Activated T-helper 2 cell treated with anti-CD3 and anti-CD28 coated beads, Interferon-gamma antibody, Interleukin-2, Interleukin-4, amounts not matched to agents 10 μg/mL and 5 μg/mL and 100 μg/mL, durations not matched to agents 14 hours and 24 hours and 36 hours (primary cell): ENCODE measurements at regions of chr1 and their contacts with region 1.

Region 1: DNA sequence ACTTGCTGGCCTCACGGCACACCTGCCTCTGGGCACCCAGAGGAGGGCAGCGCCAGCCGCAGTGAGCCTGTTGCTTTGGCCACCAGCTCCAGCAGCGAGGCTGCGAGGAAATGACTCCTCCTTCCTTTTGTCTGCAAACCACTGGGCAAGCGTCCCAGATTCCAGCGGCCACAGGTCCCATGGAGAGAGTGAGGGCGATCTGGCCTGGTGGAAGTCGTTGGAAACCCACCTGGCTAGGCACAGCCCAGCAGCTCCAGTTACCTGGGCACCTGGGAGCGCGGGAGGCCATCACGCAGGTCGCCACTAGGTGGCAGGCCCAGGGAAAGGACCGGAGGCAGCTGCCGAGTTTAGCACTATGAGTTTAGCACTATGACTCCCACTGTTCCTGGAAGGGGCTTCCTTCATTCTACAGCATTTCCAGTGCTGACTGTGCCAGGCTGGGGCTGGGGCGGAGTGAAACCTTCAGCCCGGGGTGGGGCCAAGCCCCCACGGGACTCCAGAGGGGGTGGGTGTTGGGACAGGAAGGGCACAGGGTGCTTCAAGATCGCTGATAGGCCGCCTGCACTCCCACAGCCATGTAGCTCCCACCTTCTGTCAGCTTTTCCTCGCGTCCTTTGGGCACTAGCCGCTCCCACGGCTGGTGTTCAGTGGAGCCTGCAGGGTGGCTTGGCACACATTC is 1.1 kb upstream of the ESPN start:
- DNase-seq: peak; percentile 49
- H3K4me3 Mint-ChIP-seq: no peak overlapping the region
- H3K27ac Mint-ChIP-seq: no peak overlapping the region
- H3K4me1 Mint-ChIP-seq: peaks cover 3% of the 10 kb centered on the region
- H3K27me3 Mint-ChIP-seq: peaks cover 44% of the 10 kb centered on the region

Region 2: GRCh38 chr1:6454856-6455751 is 31.6 kb after region 1 on chr1:
- intact Hi-C with region 1: loop called (anchors 2 kb)
- DNase-seq: no peak
- H3K4me3 Mint-ChIP-seq: no peak overlapping the region
- H3K27ac Mint-ChIP-seq: no peak overlapping the region
- H3K4me1 Mint-ChIP-seq: peaks cover 9% of the 10 kb centered on the region
- H3K27me3 Mint-ChIP-seq: peaks cover 43% of the 10 kb centered on the region